ENCODE measurements at regions of chr6 and their contacts with region 1.

Region 1: GRCh38 chr6:167141667-167142432 is 15.9 kb downstream of the GPR31 start:
- DNase-seq: peak; percentile 90
- H3K4me3 ChIP-seq: no peak overlapping the region; a peak in 1 of 4 replicates
- H3K27ac ChIP-seq: no peak overlapping the region
- H3K4me1 ChIP-seq: peaks cover 0 to 3% of the 10 kb centered on the region in 2 experiments; a peak in 1 of 4 replicates
- H3K27me3 ChIP-seq: 0 out of 2 replicates have a peak, but pooled peaks cover 5% of the 10 kb centered on the region
- CTCF ChIP-seq: peak; percentile 58
- EP300 ChIP-seq: no peak
- RAD21 ChIP-seq: peak; percentile 97

Region 2: DNA sequence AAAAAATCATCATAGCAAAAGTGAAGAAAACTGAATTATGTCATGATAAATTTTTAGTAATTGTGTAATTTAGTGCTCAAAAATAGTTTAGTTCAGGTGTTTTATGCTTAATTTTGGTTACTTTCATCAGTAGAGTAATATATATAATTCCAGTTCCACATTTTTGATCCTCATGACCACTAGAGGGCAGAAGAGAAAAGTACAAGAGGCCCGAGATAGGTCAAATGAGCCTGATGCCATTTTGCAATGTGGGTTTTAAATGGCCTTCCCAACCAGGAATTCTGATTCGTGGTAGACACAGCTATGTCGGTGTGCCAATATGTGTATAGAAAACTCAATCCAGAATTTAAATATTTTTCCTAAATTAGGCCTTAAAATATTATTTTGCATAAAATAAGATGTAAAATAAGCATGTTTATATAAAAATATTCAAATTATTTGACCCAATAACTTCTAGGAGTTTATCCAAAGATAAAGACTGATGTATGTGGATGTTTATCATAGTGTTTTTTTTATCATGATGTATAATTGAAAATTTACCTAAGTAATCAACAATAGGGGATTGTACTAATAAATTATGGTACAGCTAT is 355.1 kb before region 1 on chr6:
- CTCF ChIA-PET with region 1: interaction called, 12 read pairs
- POLR2A ChIA-PET with region 1: no interaction called
- DNase-seq: peak; percentile 78
- H3K4me3 ChIP-seq: peak overlapping the region in 1 of 2 experiments; percentile 24; a peak in 1 of 4 replicates
- H3K27ac ChIP-seq: no peak overlapping the region
- H3K4me1 ChIP-seq: no peaks in the 10 kb centered on the region
- H3K27me3 ChIP-seq: no peaks in the 10 kb centered on the region
- CTCF ChIP-seq: peak; percentile 82
- EP300 ChIP-seq: no peak
- RAD21 ChIP-seq: peak; percentile 89

Region 3: GRCh38 chr6:166956444-166957086 is 185.3 kb before region 1 on chr6 and contains the start of gene RNASET2:
- CTCF ChIA-PET with region 1: interaction called, 12 read pairs
- POLR2A ChIA-PET with region 1: no interaction called
- DNase-seq: peak; percentile 98
- H3K4me3 ChIP-seq: peak within 1 kb of the TSS; percentile 82 to 89
- H3K27ac ChIP-seq: peak within 1 kb of the TSS; percentile 47 to 60; a peak in 3 of 4 replicates
- H3K4me1 ChIP-seq: peaks cover 0 to 14% of the 10 kb centered on the region in 2 experiments; a peak in 1 of 4 replicates
- H3K27me3 ChIP-seq: no peaks in the 10 kb centered on the region
- CTCF ChIP-seq: no peak
- EP300 ChIP-seq: no peak
- RAD21 ChIP-seq: no peak
- polyA plus RNA-seq, gene RNASET2: 58.4 and 59.2 TPM in 2 replicates

Region 4: GRCh38 chr6:166989427-166990032 is 152.3 kb before region 1 on chr6:
- CTCF ChIA-PET with region 1: interaction called, 23 read pairs
- POLR2A ChIA-PET with region 1: no interaction called
- DNase-seq: peak; percentile 34
- H3K4me3 ChIP-seq: no peak overlapping the region; a peak in 1 of 4 replicates
- H3K27ac ChIP-seq: no peak overlapping the region
- H3K4me1 ChIP-seq: peaks cover 0 to 9% of the 10 kb centered on the region in 2 experiments; a peak in 1 of 4 replicates
- H3K27me3 ChIP-seq: no peaks in the 10 kb centered on the region
- CTCF ChIP-seq: peak; percentile 55
- EP300 ChIP-seq: no peak
- RAD21 ChIP-seq: peak; percentile 70

Region 5: DNA sequence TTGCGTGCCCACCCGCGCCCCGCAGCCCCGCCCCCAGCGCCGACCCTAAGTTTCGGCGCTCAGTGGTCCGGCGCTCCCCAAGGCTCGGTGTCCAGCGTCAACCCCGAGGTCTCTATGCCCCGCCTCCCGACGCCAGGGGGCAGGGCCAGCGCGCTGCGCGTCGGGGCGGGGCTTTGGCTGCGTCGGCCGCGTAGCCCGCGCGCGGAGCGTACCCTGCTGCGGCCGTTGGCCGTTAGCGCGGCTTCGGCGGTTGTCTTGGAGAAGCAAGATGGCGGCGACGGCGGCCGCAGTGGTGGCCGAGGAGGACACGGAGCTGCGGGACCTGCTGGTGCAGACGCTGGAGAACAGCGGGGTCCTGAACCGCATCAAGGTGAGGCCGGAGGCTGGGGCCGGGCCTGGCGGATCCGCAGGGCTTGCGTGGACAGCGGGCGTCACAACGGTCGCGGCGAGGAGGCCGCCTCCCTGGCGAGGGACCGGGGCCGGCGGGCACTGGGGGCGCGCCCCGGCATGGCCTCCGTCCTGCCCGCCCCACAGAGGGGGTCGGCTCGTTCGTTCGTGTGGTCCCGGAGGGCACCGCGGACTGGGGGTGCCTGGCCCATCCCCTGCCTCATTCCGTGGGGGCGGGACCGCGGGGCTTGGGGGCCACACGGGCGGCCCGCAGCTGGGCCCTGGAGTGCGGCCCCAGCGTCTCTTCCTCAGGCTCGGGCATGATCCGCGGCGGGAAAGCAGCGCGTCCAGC is 142.5 kb before region 1 on chr6 and contains the start of gene CEP43:
- CTCF ChIA-PET with region 1: interaction called, 27 read pairs
- POLR2A ChIA-PET with region 1: no interaction called
- DNase-seq: peak; percentile 99
- H3K4me3 ChIP-seq: peak within 1 kb of the TSS; percentile 96 to 97
- H3K27ac ChIP-seq: peak within 1 kb of the TSS; percentile 42 to 86; a peak in 3 of 4 replicates
- H3K4me1 ChIP-seq: peaks cover 15 to 24% of the 10 kb centered on the region in 2 experiments; a peak in 3 of 4 replicates
- H3K27me3 ChIP-seq: no peaks in the 10 kb centered on the region
- CTCF ChIP-seq: no peak
- EP300 ChIP-seq: peak in 1 of 2 experiments; percentile 54; a peak in 1 of 4 replicates
- RAD21 ChIP-seq: no peak
- polyA plus RNA-seq, gene CEP43: 7.5 and 9.7 TPM in 2 replicates

Region 6: DNA sequence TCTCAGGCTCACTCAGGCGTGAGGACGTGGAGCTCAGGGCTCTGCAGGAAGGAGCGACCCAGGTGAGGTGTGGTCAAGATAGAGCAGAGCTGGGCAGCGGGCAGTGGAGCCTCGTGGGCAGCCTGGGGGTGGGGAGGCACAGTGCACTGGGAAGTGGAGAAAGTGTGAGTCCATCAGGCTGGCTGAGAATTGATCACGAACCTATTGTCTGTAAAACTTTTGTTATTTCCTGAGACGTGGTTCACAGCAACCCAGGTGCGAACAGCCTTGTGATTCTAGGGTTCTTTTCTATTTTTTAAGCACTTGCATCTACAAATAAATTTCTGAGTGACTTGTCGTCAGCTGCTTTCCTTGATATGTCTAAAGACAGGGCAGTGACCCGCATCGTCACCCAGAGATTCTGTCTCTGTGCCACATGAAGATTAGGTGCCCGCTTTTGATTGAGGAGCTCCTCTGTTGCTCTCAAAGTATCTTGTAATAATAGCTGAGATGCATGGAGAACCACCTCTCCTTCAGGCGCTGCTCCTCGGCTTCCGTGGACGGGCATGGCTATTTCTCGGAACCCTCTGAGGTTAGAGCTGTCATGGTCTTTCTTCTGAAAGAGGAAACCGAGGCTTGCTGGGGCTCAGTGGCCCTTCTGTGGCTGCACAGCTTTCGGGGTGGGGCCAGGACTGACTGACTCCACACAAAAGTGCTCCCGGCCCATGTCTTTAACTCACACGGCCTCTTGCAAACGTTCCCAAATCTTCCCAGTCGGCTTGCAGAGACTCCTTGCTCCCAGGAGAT is 19.6 kb before region 1 on chr6:
- CTCF ChIA-PET with region 1: interaction called, 15 read pairs
- POLR2A ChIA-PET with region 1: no interaction called
- DNase-seq: no peak
- H3K4me3 ChIP-seq: no peak overlapping the region
- H3K27ac ChIP-seq: no peak overlapping the region
- H3K4me1 ChIP-seq: no peaks in the 10 kb centered on the region
- H3K27me3 ChIP-seq: no peaks in the 10 kb centered on the region
- CTCF ChIP-seq: no peak
- EP300 ChIP-seq: no peak
- RAD21 ChIP-seq: no peak

Region 7: GRCh38 chr6:167699141-167699931 is 557.5 kb after region 1 on chr6:
- CTCF ChIA-PET with region 1: no interaction called
- POLR2A ChIA-PET with region 1: no interaction called
- DNase-seq: no peak
- H3K4me3 ChIP-seq: no peak overlapping the region
- H3K27ac ChIP-seq: no peak overlapping the region
- H3K4me1 ChIP-seq: peaks cover 0 to 29% of the 10 kb centered on the region in 2 experiments; a peak in 3 of 4 replicates
- H3K27me3 ChIP-seq: no peaks in the 10 kb centered on the region
- CTCF ChIP-seq: no peak
- EP300 ChIP-seq: no peak
- RAD21 ChIP-seq: no peak